PC-3 (cell line): ENCODE measurements at regions of chr7 and their contacts with region 1.

Region 1: GRCh38 chr7:129367700-129368388 is 66.4 kb upstream of the STRIP2 start:
- DNase-seq: peak; percentile 86
- ATAC-seq: peak; percentile 93
- H3K4me3 ChIP-seq: peak overlapping the region; percentile 50
- H3K27ac ChIP-seq: peak overlapping the region; percentile 60
- H3K4me1 ChIP-seq: peaks cover 14% of the 10 kb centered on the region; the same call in 1 of the 2 replicates
- H3K27me3 ChIP-seq: no peaks in the 10 kb centered on the region
- CTCF ChIP-seq: peak; percentile 94

Region 2: DNA sequence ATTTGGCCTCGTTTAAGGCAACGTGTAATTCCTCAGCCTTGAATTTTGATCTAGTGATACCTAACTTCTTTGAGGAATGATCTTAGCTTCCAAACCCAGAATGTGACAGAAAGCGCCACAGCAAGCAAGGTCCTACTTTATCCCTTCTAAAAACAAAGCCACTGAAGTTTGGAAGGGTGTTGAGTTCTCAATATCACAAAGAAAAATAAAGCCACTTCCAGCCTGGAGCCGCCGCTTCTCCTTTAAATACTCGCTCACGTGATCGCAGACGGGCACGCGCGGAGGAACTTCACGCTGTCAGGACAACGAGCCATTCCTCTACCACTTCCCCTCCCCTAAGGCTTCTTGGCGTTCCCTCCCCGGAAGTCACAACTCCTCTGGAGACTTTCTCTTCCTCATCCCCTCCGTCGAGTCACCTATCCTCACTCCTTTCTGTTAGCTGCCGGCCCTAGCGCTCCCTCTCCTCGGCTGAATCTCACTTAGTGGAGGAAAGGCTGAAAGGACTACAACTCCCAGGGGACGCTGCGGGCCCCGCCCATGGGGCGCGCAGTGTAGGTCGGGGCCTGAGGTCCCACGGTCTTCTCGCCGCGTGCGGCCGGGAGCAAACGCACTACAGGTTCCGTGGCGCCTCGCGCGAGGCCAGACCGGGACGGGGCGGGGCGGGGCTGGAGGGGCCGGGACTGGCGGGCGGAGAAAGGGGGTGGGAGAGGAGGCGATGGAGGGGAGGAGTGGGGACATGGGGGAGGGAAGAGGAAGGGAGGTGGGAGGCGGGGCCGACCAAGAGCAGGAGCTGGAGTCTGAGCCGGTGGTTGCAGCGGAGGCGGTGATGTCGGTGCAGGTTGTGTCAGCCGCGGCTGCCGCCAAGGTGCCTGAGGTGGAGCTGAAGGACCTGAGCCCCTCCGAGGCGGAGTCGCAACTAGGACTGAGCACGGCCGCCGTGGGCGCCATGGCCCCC is 143.3 kb before region 1 on chr7 and contains the start of gene AHCYL2:
- CTCF ChIA-PET with region 1: interaction called, 5 read pairs
- POLR2A ChIA-PET with region 1: interaction called, 9 read pairs
- intact Hi-C with region 1: loop called (anchors 1 kb)
- DNase-seq: peak; percentile 95
- ATAC-seq: peak; percentile 90
- H3K4me3 ChIP-seq: peak within 1 kb of the TSS; percentile 82
- H3K27ac ChIP-seq: peak within 1 kb of the TSS; percentile 67
- H3K4me1 ChIP-seq: peaks cover 20% of the 10 kb centered on the region
- H3K27me3 ChIP-seq: no peaks in the 10 kb centered on the region
- CTCF ChIP-seq: no peak
- total RNA-seq, gene AHCYL2: 7.9 and 9.2 TPM in 2 replicates

Region 3: DNA sequence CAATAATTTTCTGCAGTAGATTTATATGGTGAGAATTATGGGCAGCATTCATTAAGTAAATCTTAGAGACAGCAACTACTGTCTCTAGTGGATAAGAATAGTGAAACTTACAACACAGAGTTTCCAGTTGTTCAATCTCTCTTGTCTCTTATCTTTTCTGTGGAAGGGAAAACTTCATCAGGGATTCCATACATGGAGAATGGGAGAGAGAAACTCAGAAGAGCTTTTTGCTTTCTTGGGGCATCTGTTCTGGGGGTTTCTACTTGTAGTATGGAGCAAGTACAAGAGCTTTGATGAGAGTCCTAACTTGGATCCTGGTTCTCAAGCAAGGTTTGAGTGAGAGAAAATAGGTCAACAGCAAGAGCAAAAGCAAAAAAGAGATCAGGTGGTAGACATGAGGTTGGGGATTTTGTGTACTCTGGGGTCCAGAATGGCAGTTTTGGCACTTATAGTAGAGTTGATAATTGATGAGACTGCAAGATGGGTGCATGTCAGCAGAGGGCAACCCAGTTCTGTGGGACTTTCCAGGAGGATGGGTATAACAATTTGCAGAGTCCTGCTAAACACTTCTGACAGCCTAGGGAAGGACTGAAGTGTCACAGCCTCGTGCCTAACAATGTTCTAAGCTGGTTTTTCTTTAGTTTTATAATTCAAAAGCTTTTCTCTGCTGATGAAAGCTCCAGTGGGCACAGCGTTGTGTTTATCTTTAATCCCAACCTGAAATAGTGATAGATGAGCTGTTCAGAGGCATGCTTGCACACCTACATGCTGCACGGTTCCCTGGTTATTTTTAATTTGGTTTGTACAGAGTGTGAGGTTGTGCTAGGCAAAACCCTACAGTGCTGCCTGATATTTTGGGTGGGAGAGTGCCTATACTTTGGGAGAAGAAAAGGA is 34.4 kb after region 1 on chr7:
- CTCF ChIA-PET with region 1: interaction called, 14 read pairs
- POLR2A ChIA-PET with region 1: no interaction called
- intact Hi-C with region 1: no loop called
- DNase-seq: peak; percentile 45
- ATAC-seq: peak; percentile 31
- H3K4me3 ChIP-seq: no peak overlapping the region
- H3K27ac ChIP-seq: peak overlapping the region; percentile 50
- H3K4me1 ChIP-seq: peaks cover 18% of the 10 kb centered on the region
- H3K27me3 ChIP-seq: no peaks in the 10 kb centered on the region
- CTCF ChIP-seq: peak; percentile 59

Region 4: GRCh38 chr7:129423700-129424618 is 56.1 kb after region 1 on chr7:
- CTCF ChIA-PET with region 1: no interaction called
- POLR2A ChIA-PET with region 1: no interaction called
- intact Hi-C with region 1: no loop called
- DNase-seq: peak; percentile 53
- ATAC-seq: no peak
- H3K4me3 ChIP-seq: no peak overlapping the region
- H3K27ac ChIP-seq: no peak overlapping the region
- H3K4me1 ChIP-seq: no peaks in the 10 kb centered on the region
- H3K27me3 ChIP-seq: no peaks in the 10 kb centered on the region
- CTCF ChIP-seq: no peak

Region 5: DNA sequence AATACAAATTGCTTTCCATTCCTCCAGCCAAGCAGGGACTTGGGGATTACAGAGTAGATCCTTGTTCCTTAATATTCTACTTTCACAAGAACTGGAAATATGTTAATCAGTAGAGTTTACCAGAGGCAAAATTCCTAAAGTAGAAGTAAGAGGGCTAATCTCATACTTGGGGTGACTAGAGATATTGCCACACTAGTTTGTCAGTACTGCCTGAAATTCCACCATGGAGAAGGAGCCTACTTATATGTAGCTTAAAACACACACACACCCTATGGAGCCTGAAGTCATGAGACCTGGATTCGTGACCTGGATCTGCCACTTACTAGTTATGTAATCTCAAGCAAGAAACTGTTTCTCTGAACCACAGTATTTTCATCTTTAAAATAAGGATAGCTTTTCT is 100.2 kb after region 1 on chr7:
- CTCF ChIA-PET with region 1: interaction called, 42 read pairs
- POLR2A ChIA-PET with region 1: no interaction called
- intact Hi-C with region 1: loop called (anchors 1 kb)
- DNase-seq: no peak
- ATAC-seq: no peak
- H3K4me3 ChIP-seq: no peak overlapping the region
- H3K27ac ChIP-seq: no peak overlapping the region
- H3K4me1 ChIP-seq: peaks cover 23% of the 10 kb centered on the region
- H3K27me3 ChIP-seq: no peaks in the 10 kb centered on the region
- CTCF ChIP-seq: no peak